ENCODE measurements at regions of chr17 and their contacts with region 1.

Region 1: DNA sequence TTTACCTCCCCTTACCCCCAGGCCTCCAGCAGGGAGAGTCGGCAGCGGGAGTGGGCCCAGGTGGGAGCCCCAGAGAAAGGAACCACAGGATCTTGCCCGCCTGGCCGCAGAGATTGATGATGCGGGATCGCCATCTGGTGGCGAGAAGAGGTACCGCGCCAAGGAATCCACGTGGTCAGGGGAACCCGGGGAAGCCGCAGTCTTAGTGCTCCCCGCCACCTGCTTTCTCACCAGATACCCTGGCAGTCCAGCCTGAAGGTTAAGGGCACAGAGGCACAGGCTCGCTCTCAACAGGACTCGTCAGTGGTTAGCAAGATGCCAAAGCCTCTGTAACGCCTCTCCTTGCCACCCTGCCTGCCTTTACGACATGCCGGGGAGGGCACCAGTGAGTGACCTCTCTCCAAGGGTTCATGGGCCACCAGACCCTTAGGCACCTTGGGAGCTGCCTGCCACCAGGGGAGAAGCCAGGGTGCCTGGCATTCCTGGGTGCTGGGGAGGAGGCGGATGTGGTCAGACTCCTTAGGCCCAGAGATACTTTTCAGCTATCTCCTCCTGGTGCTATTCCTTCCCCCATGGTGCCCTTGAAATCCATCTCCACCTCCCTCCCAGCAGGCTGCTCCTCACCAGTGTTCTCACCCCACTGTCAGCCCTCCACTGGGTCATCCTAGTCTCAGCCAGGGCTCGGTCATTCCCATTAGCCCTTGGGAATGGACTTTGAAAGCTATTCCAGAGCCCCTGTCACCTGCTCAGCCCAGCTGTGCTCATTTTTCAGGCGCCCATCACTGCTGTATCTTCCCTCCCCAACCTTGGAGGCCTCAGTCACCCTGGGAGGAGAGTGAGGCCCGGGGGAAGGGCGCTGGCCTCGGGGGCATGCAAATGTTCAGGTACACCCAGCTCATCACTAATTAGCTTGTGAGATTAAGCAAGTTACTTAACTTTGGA is 5.5 kb upstream of the RHBDF2 start:
- DNase-seq: peak; percentile 54
- H3K4me3 ChIP-seq: no peak overlapping the region
- H3K27ac ChIP-seq: no peak overlapping the region
- H3K4me1 ChIP-seq: peaks cover 8% of the 10 kb centered on the region
- H3K27me3 ChIP-seq: no peaks in the 10 kb centered on the region
- CTCF ChIP-seq: peak; percentile 85 to 95

Region 2: GRCh38 chr17:76307299-76307965 is 199.2 kb before region 1 on chr17:
- CTCF ChIA-PET with region 1: interaction called, 3 read pairs
- dilution Hi-C with region 1: no loop called
- in situ Hi-C with region 1: loop called in 1 of 2 experiments (anchors 10 kb)
- intact Hi-C with region 1: loop called (anchors 5 kb)
- DNase-seq: no peak
- H3K4me3 ChIP-seq: no peak overlapping the region
- H3K27ac ChIP-seq: no peak overlapping the region
- H3K4me1 ChIP-seq: no peaks in the 10 kb centered on the region
- H3K27me3 ChIP-seq: no peaks in the 10 kb centered on the region
- CTCF ChIP-seq: no peak

Region 3: GRCh38 chr17:76408052-76408849 is 98.4 kb before region 1 on chr17:
- CTCF ChIA-PET with region 1: no interaction called
- dilution Hi-C with region 1: no loop called
- in situ Hi-C with region 1: loop called (anchors 5 to 10 kb)
- intact Hi-C with region 1: loop called (anchors 1 kb)
- DNase-seq: peak; percentile 52
- H3K4me3 ChIP-seq: no peak overlapping the region
- H3K27ac ChIP-seq: no peak overlapping the region
- H3K4me1 ChIP-seq: no peaks in the 10 kb centered on the region
- H3K27me3 ChIP-seq: no peaks in the 10 kb centered on the region
- CTCF ChIP-seq: peak; percentile 96 to 98

Region 4: DNA sequence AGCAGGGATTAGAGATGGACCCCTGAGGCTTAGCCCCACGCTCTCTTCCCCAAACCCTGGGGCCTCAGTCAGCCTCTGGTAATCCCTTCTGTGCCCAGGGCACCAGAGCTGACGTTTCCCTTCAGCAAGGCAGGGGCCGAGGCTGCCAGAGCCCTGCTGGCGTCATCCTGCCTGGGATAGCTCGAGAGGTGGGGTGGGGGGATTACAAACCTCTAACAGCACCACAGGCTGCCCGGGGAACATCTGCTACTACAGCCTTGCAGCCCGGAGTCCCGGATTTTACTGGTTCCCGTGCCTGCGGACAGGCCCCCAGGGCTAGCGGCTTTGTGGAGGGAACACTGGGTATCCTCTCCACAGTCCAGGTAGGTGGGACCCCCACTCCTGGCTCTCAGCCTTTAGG is 39.3 kb before region 1 on chr17 and contains the start of gene AANAT:
- CTCF ChIA-PET with region 1: interaction called, 3 read pairs
- dilution Hi-C with region 1: loop called (anchors 5 kb)
- in situ Hi-C with region 1: loop called (anchors 5 kb)
- intact Hi-C with region 1: loop called (anchors 1 kb)
- DNase-seq: no peak
- H3K4me3 ChIP-seq: no peak within 1 kb of the TSS
- H3K27ac ChIP-seq: no peak within 1 kb of the TSS
- H3K4me1 ChIP-seq: no peaks in the 10 kb centered on the region
- H3K27me3 ChIP-seq: no peaks in the 10 kb centered on the region
- CTCF ChIP-seq: no peak
- total RNA-seq, gene AANAT: not detected

Region 5: DNA sequence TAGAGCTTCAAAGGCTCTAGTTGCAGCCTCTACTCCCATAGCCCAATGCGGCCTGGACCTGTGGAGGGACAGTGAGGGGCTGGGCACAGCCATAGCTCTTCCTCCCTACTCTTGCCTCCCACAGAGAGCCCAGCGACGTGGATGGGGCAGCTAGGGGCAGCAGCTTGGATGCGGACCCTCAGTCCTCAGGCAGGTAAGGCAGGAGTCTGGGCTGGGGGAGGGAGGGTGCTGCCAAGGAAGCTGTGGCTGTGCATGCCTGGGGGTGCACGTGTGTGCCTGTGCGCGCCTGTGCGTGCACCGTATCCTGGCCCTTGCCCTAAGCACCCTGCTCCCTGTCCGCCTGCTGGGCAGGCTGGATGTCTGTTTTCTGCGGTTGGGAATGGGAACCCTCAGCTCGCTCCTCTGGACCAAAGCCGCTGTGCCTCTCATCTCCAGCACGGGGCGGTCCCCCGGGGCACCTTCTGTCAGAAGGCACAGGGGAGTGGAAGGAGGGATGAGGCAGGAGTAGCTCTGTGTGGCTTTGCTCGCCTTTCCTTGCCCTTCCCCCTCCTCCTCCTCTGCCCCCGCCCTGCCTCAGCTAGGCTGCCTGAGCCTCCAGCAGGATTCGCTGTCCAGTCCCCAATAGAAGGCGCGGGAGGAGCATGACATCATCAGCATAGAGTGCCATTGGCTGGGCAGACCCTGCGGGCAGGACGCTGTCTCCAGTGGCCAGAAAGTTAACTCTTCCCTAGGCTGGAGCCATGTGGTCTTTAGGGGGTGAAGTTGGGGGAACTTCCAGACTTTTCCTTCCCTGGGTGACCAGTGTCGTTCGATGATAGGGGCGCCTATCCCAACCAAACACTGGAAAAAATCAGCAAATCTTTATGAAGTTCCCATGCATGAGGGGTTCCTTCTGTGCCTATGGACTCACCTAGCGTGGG is 34.0 kb after region 1 on chr17:
- CTCF ChIA-PET with region 1: no interaction called
- dilution Hi-C with region 1: no loop called
- in situ Hi-C with region 1: no loop called
- intact Hi-C with region 1: no loop called
- DNase-seq: peak; percentile 92
- H3K4me3 ChIP-seq: peak overlapping the region in 2 of 3 experiments; percentile 36 to 40
- H3K27ac ChIP-seq: peak overlapping the region; percentile 34
- H3K4me1 ChIP-seq: peaks cover 24% of the 10 kb centered on the region
- H3K27me3 ChIP-seq: no peaks in the 10 kb centered on the region
- CTCF ChIP-seq: peak in 1 of 2 donors; percentile 35

Region 6: GRCh38 chr17:76643553-76644148 is 137.0 kb after region 1 on chr17 and contains the start of gene ST6GALNAC1:
- CTCF ChIA-PET with region 1: no interaction called
- dilution Hi-C with region 1: no loop called
- in situ Hi-C with region 1: no loop called
- intact Hi-C with region 1: no loop called
- DNase-seq: no peak
- H3K4me3 ChIP-seq: no peak within 1 kb of the TSS
- H3K27ac ChIP-seq: no peak within 1 kb of the TSS
- H3K4me1 ChIP-seq: peaks cover 4% of the 10 kb centered on the region
- H3K27me3 ChIP-seq: no peaks in the 10 kb centered on the region
- CTCF ChIP-seq: no peak
- total RNA-seq, gene ST6GALNAC1: not detected